ENCODE measurements at regions of chr2 and their contacts with region 1.

Region 1: DNA sequence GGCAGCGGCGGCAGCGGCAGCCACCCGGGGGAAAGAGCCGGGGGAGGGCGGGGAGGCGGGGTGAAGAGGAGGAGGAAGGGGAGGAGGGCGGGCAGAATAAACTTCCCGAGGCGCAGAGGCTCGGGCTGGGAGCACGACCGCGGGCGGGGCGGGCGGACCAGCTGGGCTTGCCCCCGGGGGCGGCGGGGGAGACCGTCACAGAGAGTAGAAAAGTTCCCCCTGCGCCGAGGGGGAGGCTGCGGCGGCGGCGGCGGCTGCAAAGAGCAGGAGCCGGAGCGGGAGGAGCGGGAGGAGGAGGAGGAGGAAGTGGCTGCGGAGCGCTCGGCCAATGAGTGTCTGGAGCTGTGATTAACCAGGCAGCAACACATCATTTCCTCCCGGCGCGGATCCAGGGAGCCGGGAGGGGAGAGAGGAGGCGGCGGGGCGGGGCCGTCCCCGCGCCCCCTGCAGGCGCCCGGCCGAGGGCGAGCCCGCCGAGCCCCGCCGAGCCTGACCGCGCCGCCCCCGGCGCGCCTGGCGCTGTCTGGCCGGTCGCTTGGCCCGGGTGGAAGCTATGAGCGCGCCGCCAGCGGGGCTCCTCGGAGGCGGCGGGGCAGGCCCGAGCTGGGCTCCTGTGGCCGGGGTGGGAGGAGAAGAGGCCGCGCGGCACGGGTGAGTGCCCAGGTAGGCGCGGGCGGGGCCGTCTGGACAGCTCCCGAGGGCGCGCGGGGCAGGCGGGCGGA is at the start of gene ACVR1:
- DNase-seq: peak; percentile 98
- ATAC-seq: peak; percentile 95
- total RNA-seq, gene ACVR1: 25.3 TPM

Region 2: GRCh38 chr2:157777427-157777826 is 98.8 kb before region 1 on chr2:
- intact Hi-C with region 1: loop called (anchors 2 kb)
- DNase-seq: no peak
- ATAC-seq: no peak

Region 3: GRCh38 chr2:157825885-157826284 is 50.3 kb before region 1 on chr2:
- intact Hi-C with region 1: loop called (anchors 10 kb)
- DNase-seq: no peak
- ATAC-seq: no peak

Region 4: DNA sequence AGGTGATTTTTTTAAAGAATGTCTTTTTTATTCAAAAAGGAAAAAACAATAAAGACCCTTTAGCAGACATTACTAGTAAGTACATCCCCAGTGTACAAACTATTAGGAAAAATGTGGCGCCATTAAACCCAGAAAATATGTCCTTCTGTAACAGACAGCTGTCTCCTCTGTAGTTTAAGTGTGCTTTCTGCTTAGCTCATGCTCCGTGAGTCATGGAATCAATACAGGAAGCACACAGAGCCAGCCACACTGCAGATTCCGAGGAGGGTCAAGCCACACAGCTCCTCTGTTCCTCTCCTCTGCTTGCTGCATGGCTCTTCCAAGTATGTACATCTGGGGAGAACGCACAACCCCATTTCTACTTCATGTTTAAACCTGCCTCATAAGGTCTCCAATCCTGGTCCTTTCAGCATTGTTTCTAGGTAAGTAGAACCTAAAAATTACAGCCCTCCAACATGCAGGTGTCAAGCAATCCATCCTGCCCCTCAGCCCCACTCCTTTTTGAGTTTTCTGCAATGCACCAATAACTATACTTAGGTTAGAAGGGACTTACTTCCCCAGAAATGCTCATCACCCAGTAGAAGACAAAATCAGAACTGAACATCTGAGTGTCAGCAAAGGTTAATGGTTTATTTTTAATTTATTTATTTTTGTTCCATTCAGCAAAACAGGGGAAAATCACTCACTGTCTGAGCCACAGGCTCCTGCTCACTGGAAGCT is 37.6 kb before region 1 on chr2:
- intact Hi-C with region 1: loop called (anchors 2 kb)
- DNase-seq: no peak
- ATAC-seq: peak; percentile 80

Region 5: DNA sequence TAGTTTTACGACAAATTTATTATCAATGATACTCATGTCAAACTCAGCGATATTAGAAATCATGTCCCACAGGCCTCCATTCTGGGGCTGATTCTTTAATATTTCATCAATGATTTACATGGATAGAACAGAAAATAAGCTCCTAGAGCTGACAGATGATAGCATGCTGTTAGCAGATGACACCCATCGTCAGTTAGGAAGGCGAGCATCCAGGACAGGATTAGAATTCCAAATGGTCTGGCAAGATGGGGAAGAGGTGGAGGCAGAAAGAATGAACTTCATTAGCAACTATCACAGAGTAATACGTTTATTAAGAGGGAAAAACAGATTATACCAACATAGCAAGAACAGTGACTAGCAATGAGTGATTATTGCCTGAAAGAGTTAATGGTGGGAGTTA is 46.1 kb after region 1 on chr2:
- intact Hi-C with region 1: no loop called
- DNase-seq: no peak
- ATAC-seq: no peak

Measured in Right ventricle myocardium inferior (tissue), 1 donor.